Heart right ventricle (tissue), 16 donors: ENCODE measurements at regions of chr17 and their contacts with region 1.

Region 1: DNA sequence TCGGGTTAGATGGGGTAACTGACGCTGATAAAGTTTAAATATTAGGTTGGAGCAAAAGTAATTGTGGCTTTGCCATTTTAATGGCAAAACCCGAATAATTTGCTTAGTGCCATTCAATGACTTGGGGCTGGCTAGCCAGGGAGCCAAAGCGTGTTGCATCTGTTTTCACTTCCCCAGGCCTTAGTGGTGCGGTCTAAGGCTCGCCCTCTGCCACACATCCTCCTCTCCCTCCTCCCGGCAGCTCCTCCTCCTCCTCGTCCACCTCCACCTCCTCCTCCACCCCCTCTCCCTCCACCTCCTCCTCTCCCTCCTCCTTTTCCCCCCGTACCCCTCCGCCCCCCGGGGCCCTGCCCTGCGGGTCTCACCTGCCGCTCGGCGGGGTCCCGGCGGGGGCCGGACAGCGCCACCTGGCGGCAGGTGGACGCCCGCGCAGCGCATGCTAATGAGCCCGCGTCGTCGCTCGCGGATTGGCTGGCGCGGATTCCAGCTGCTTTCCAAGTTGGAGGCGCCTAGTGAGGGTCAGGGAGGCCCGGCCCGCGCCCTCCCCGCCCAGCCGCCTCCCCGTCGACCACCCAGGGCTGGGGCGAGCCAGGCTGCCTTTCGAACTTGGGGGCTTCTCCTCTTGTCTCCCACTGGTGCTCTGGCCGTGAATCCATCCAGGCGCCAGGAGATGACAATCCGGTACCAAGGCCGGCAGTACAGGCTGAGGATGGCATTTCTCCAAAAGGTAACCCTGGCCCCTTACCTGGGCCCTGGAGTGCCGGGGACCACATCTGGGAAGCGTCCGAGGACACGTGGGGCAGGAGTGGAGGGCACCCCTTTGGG is 36.6 kb upstream of the RGS9 start:
- DNase-seq: peak; percentile 83 to 91
- ATAC-seq: peak; percentile 95 to 98 (median 96)
- H3K4me3 ChIP-seq: peak overlapping the region; percentile 41 to 64 (median 58)
- H3K27ac ChIP-seq: peak overlapping the region in 7 of 10 donors; percentile 10 to 84 (median 64)
- H3K4me1 ChIP-seq: peaks cover 0 to 20% (median 12%) of the 10 kb centered on the region in 9 donors
- H3K27me3 ChIP-seq: no peaks in the 10 kb centered on the region
- CTCF ChIP-seq: peak; percentile 81 to 93 (median 84)

Region 2: GRCh38 chr17:64968652-64969501 is 131.7 kb before region 1 on chr17:
- intact Hi-C with region 1: loop called in 5 of 10 experiments (anchors 5 to 10 kb)
- DNase-seq: no peak
- ATAC-seq: no peak
- H3K4me3 ChIP-seq: no peak overlapping the region
- H3K27ac ChIP-seq: peak overlapping the region in 1 of 10 donors; percentile 76
- H3K4me1 ChIP-seq: peaks cover 0 to 27% (median 10%) of the 10 kb centered on the region in 9 donors
- H3K27me3 ChIP-seq: no peaks in the 10 kb centered on the region
- CTCF ChIP-seq: no peak

Region 3: GRCh38 chr17:64975329-64976087 is 125.0 kb before region 1 on chr17:
- intact Hi-C with region 1: loop called in 4 of 10 experiments (anchors 5 to 10 kb)
- DNase-seq: peak; percentile 93 to 97
- ATAC-seq: peak; percentile 97 to 99 (median 97)
- H3K4me3 ChIP-seq: peak overlapping the region; percentile 63 to 92 (median 80)
- H3K27ac ChIP-seq: peak overlapping the region; percentile 91 to 100 (median 96)
- H3K4me1 ChIP-seq: peaks cover 2 to 32% (median 12%) of the 10 kb centered on the region in 9 donors
- H3K27me3 ChIP-seq: no peaks in the 10 kb centered on the region
- CTCF ChIP-seq: no peak

Region 4: DNA sequence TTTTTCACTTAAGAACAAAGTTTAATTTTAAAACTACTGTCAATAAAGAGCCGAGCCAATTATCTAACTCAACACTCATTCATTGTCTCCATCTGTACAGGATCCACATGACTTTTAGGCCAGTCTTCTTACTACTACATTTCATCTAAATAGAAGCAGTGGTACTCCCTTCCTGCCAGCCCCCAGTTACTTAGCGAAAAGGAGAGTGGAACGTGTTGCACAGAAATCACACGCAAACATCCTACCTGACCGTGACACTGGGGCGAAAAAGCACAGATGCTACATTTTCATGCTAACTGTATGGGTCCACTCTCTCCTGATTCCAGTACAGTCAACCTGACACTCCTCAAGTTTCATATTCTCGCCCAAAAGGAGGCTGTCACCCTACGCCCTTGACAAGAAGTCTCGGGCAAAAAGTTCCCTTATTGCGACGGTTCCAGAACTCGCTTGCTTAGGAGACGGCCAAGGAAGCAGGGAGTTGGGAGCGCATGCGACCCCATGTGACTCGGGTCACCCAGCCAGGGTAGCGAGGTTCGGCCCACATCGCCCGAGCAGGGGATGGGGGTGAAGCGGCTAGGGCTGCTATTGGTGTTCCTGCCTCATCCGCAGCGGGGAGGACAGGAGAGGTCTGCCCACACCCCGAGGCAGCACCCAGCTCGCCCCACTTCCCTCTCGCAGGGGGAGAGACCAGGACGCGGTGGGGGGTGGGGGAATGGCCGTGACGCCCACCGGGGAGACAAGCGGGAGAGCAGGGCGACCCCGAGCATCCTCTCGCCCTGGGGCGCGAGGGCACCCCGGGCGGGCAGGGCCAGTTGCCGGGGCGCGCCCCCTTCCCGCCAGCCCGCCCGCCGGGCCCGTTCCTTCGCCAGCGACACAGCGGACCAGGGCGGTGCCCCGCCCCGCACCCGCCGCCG is 44.9 kb before region 1 on chr17:
- intact Hi-C with region 1: loop called in 6 of 10 experiments (anchors 5 kb)
- DNase-seq: peak; percentile 64 to 69
- ATAC-seq: peak; percentile 31 to 63 (median 36)
- H3K4me3 ChIP-seq: peak overlapping the region; percentile 64 to 94 (median 88)
- H3K27ac ChIP-seq: peak overlapping the region; percentile 93 to 100 (median 98)
- H3K4me1 ChIP-seq: peaks cover 4 to 80% (median 48%) of the 10 kb centered on the region in 9 donors
- H3K27me3 ChIP-seq: no peaks in the 10 kb centered on the region
- CTCF ChIP-seq: no peak

Region 5: DNA sequence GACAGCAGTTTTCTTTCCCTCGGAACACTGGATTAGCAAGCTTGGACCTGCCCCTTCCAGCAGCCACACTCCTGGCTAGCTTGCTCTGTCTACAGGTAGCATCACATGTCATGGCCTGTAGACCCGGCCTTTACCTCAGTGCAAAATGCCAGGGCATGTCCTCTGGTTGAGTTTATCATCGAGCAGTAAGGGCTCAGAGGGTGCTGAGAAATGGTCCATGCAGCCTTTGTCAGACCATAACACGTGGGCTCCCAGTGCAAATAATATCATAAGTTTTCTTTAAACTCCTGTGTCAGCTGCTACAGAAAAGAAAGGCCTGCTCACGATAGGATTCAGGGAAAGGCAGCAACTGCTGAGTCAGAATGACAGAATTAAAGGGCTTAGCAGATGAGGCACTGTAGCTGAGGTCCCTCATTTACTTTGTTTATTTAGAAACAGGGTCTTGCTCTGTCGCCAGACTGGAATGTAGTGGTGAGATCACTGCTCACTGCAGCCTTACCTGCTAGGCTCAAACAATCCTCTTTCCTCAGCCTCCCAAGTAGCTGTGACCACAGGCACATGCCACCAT is 36.0 kb before region 1 on chr17:
- intact Hi-C with region 1: loop called in 6 of 10 experiments (anchors 5 kb)
- DNase-seq: no peak
- ATAC-seq: no peak
- H3K4me3 ChIP-seq: no peak overlapping the region
- H3K27ac ChIP-seq: no peak overlapping the region
- H3K4me1 ChIP-seq: peaks cover 3 to 44% (median 17%) of the 10 kb centered on the region in 9 donors
- H3K27me3 ChIP-seq: no peaks in the 10 kb centered on the region
- CTCF ChIP-seq: no peak

Region 6: GRCh38 chr17:65163990-65164495 is 63.5 kb after region 1 on chr17:
- intact Hi-C with region 1: no loop called
- DNase-seq: no peak
- ATAC-seq: peak in 1 of 8 donors; percentile 48
- H3K4me3 ChIP-seq: no peak overlapping the region
- H3K27ac ChIP-seq: no peak overlapping the region
- H3K4me1 ChIP-seq: no peaks in the 10 kb centered on the region
- H3K27me3 ChIP-seq: peaks cover 0 to 14% (median 0%) of the 10 kb centered on the region in 7 donors
- CTCF ChIP-seq: no peak

Region 7: GRCh38 chr17:65198653-65199382 is 98.3 kb after region 1 on chr17:
- intact Hi-C with region 1: loop called in 1 of 10 experiments (anchors 10 kb)
- DNase-seq: peak in 1 of 2 donors; percentile 5
- ATAC-seq: peak in 5 of 8 donors; percentile 31 to 70 (median 44)
- H3K4me3 ChIP-seq: no peak overlapping the region
- H3K27ac ChIP-seq: no peak overlapping the region
- H3K4me1 ChIP-seq: no peaks in the 10 kb centered on the region
- H3K27me3 ChIP-seq: peaks cover 0 to 7% (median 0%) of the 10 kb centered on the region in 7 donors
- CTCF ChIP-seq: peak; percentile 57 to 82 (median 78)